H1 (cell line): ENCODE measurements at regions of chr1 and their contacts with region 1.

Region 1: GRCh38 chr1:19414515-19415121 is 70.7 kb downstream of the CAPZB start:
- DNase-seq: no peak
- H3K4me3 ChIP-seq: no peak overlapping the region
- H3K27ac ChIP-seq: no peak overlapping the region
- H3K4me1 ChIP-seq: peaks cover 0 to 5% (median 2%) of the 10 kb centered on the region in 4 experiments; a peak in 1 of 7 replicates
- H3K27me3 ChIP-seq: no peaks in the 10 kb centered on the region
- CTCF ChIP-seq: no peak
- EP300 ChIP-seq: no peak
- POLR2A ChIP-seq: no peak
- RAD21 ChIP-seq: no peak

Region 2: GRCh38 chr1:19390901-19391595 is 23.6 kb before region 1 on chr1:
- CTCF ChIA-PET with region 1: interaction called, 10 read pairs
- POLR2A ChIA-PET with region 1: no interaction called
- DNase-seq: no peak
- H3K4me3 ChIP-seq: no peak overlapping the region
- H3K27ac ChIP-seq: no peak overlapping the region
- H3K4me1 ChIP-seq: peaks cover 0 to 7% (median 4%) of the 10 kb centered on the region in 4 experiments; a peak in 5 of 7 replicates
- H3K27me3 ChIP-seq: no peaks in the 10 kb centered on the region
- CTCF ChIP-seq: peak; percentile 68 to 86 (median 73)
- EP300 ChIP-seq: no peak
- POLR2A ChIP-seq: no peak
- RAD21 ChIP-seq: peak; percentile 52 to 61

Region 3: DNA sequence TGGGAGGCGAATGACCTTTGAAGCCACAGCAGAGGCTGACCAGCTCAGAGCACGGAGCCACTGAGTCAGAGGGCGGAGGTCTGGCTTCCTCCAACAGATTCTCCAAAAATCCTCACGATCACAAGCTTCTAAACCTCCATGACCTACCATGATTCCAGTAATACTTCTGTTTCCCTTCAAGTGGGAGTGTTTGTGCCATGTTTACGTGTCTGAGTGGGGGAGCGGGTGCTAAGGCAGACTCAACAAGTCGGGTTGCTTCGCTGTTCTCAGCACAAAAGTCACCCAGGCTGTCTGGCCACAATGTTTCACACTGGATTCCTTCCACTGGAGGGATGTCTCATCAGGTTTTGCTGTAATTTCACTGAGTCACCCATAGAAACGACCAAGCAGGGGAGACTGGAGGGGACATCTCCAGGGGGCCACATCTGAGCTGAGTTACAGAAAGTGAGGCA is 16.3 kb before region 1 on chr1:
- CTCF ChIA-PET with region 1: interaction called, 12 read pairs
- POLR2A ChIA-PET with region 1: interaction called, 7 read pairs
- DNase-seq: no peak
- H3K4me3 ChIP-seq: no peak overlapping the region
- H3K27ac ChIP-seq: no peak overlapping the region
- H3K4me1 ChIP-seq: peaks cover 18 to 30% (median 26%) of the 10 kb centered on the region in 4 experiments
- H3K27me3 ChIP-seq: no peaks in the 10 kb centered on the region
- CTCF ChIP-seq: no peak
- EP300 ChIP-seq: no peak
- POLR2A ChIP-seq: no peak
- RAD21 ChIP-seq: no peak

Region 4: GRCh38 chr1:19529664-19530063 is 115.0 kb after region 1 on chr1:
- CTCF ChIA-PET with region 1: no interaction called
- POLR2A ChIA-PET with region 1: no interaction called
- DNase-seq: no peak
- H3K4me3 ChIP-seq: no peak overlapping the region
- H3K27ac ChIP-seq: no peak overlapping the region
- H3K4me1 ChIP-seq: no peaks in the 10 kb centered on the region; a peak in 1 of 7 replicates
- H3K27me3 ChIP-seq: no peaks in the 10 kb centered on the region; a peak in 1 of 7 replicates
- CTCF ChIP-seq: no peak
- EP300 ChIP-seq: no peak
- POLR2A ChIP-seq: no peak
- RAD21 ChIP-seq: no peak